ENCODE measurements at regions of chr1 and their contacts with region 1.

Region 1: DNA sequence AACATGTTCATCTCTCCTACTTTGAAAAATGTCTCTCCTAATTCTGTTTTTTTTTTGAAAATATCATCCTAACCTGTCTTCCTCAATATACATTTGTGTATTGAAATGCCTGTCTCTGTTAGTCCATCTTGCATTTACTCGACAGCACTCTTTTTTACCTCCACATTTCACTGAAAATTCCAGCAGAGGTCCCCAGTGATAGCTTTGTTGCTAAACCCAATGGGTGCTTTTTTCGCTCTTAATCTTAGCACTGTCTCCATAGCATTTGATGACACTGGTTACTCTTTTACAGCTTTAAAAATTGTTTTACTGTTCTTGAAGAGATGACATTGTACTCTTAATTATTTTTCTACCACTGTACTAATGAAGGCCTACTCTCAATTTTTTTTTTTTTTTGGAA is 10.8 kb downstream of the OSBPL9 start:
- DNase-seq: peak; percentile 65
- H3K4me3 ChIP-seq: no peak overlapping the region
- H3K27ac ChIP-seq: no peak overlapping the region
- H3K4me1 ChIP-seq: no peaks in the 10 kb centered on the region
- H3K27me3 ChIP-seq: no peaks in the 10 kb centered on the region
- CTCF ChIP-seq: peak; percentile 30 to 35
- POLR2A ChIP-seq: no peak

Region 2: DNA sequence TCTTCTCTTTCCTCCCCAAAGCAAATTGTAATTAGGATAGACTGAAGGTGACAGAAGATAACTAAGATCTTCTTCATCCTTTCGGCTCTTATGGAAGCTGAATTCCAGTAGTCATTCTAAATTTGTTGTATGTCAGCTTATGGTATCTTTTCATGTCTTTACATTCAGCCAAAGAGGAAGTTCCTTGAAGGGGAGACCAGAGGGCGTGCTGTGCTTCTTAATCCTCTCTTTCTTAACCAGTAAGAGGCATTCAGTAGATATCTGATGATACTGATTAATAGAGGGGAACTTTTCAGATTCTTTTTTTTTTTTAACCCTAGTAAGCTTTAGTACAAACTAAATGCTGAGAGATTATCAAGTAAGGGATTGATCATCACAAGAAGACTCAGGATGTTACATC is 91.5 kb after region 1 on chr1:
- CTCF ChIA-PET with region 1: no interaction called
- POLR2A ChIA-PET with region 1: no interaction called
- dilution Hi-C with region 1: no loop called
- intact Hi-C with region 1: no loop called
- DNase-seq: no peak
- H3K4me3 ChIP-seq: no peak overlapping the region
- H3K27ac ChIP-seq: no peak overlapping the region
- H3K4me1 ChIP-seq: no peaks in the 10 kb centered on the region
- H3K27me3 ChIP-seq: no peaks in the 10 kb centered on the region
- CTCF ChIP-seq: no peak
- POLR2A ChIP-seq: no peak

Region 3: DNA sequence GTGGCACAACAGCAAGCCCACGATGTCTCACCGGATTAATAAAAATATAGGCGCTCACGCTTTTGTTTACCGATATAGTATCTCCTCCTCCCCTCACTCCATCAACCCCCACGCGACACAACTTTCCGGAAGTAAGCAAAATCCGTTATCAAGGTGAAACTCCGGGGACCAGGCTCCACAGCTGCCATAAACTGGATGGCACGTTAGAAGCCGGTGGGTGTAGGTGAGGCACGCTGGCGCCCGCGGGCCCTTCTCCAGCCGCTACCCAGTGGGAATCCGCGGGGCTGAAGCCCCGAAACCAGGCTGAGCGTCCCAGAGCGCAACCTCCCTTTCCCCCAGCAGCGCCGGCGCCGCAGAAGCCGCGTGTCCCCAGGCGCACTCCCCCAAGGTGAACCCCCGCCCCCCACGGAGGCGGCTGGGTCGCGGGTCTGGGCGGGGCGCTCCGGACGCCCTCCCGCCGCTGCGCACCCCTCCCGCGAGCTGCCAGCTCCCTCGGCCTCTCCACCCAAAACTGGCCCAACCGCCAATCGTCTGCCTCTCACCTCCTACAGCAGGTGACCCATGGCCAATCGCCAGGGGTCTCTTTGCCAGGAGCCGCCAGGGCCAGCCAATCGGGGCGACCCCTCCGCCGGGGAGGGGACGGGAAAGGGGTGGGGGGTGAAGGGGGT is 101.6 kb after region 1 on chr1:
- CTCF ChIA-PET with region 1: interaction called, 4 read pairs
- POLR2A ChIA-PET with region 1: no interaction called
- dilution Hi-C with region 1: no loop called
- intact Hi-C with region 1: loop called (anchors 5 kb)
- DNase-seq: peak; percentile 92
- H3K4me3 ChIP-seq: peak overlapping the region; percentile 89 to 97 (median 94)
- H3K27ac ChIP-seq: peak overlapping the region; percentile 66
- H3K4me1 ChIP-seq: peaks cover 16% of the 10 kb centered on the region
- H3K27me3 ChIP-seq: no peaks in the 10 kb centered on the region
- CTCF ChIP-seq: no peak
- POLR2A ChIP-seq: no peak